ENCODE measurements at regions of chr21 and their contacts with region 1.

Region 1: DNA sequence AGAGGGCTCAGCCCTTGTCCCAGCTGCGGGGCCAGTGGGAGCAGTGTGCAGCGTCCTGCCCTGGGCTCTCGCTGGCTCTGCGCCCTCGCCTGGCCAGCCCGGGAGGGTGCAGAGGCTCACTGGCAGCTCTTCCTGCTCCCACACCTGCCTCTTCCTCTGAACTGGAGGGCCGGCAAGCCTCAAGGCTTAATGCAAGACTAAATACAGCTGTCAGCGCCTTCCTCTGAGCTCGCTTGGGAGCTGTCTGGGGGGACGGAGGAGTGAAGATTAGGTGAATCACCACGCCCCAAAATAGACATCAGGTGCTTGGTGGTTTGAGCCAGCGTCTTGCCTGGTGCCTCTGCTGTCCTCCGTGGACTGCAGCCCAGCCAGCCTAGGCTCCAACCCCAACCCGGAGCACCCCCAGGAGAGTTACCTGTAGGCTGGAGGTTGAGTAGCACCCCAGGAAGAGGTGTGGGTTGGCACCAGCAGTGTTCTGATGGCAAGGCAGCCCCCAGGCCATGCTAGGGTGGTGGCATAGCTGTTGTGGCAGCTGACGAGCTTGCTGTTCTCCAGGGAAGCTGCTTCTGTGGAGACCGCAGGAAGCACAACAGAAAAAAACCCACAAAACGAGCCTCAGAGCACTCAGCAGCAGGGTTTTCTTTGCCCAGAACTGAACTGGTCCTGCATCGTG is 36.9 kb downstream of the UMODL1 start:
- DNase-seq: no peak
- H3K4me3 ChIP-seq: no peak overlapping the region
- H3K27ac ChIP-seq: no peak overlapping the region
- H3K4me1 ChIP-seq: peaks cover 0 to 19% (median 11%) of the 10 kb centered on the region in 4 donors
- H3K27me3 ChIP-seq: peaks cover 0 to 50% (median 0%) of the 10 kb centered on the region in 4 donors
- CTCF ChIP-seq: peak; percentile 45 to 57 (median 53)
- EP300 ChIP-seq: no peak
- POLR2A ChIP-seq: no peak

Region 2: DNA sequence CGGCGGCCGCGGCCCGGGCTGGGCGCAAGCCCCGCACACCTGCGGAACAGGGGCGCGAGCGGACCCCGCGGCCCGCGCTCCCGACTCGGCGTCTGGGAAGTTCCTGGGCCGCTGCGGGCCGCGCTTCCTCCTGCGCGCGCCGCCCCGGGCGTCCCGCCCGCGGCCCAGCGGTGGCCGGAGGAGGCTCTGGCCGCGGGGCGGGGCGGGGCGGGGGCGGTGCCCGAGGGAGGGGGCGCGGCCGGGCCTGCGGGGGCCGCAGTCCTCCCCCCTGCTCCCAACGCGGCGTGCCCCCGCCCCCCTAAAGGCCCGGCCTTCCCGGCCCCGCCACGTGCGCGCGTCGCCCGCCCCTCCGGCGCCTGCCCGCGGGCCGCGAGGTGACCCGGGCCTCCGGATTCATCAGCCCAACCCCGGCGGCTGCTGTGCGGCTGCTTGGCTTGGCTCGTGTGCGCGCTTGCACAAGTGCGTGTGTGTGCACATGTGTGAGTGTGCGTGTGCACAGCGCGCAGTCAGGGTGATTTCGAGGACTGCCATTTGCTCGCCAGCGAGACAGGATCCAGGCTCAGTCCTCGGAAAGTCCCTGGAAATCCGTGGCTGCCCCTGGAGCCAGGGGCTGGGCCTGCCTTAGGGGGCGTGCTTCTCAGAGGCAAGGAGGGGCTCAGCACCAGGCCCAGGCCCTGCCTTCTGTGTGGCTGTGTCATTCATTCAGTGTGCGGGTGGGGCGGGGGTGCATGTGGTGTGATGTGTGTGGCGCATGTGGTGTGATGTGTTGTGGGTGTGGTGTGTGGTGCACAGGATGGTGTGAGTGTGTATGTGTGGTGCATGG is 154.0 kb before region 1 on chr21 and contains the start of gene C2CD2:
- intact Hi-C with region 1: loop called (anchors 5 kb)
- DNase-seq: no peak
- H3K4me3 ChIP-seq: peak within 1 kb of the TSS; percentile 74 to 93 (median 80)
- H3K27ac ChIP-seq: peak within 1 kb of the TSS; percentile 62 to 82 (median 76)
- H3K4me1 ChIP-seq: peaks cover 28 to 72% (median 57%) of the 10 kb centered on the region in 4 donors
- H3K27me3 ChIP-seq: no peaks in the 10 kb centered on the region
- CTCF ChIP-seq: no peak
- EP300 ChIP-seq: no peak
- POLR2A ChIP-seq: no peak
- total RNA-seq, gene C2CD2: 11.6 to 25.3 (median 18.9) TPM

Region 3: GRCh38 chr21:42289926-42290325 is 181.9 kb after region 1 on chr21:
- intact Hi-C with region 1: no loop called
- DNase-seq: no peak
- H3K4me3 ChIP-seq: no peak overlapping the region
- H3K27ac ChIP-seq: no peak overlapping the region
- H3K4me1 ChIP-seq: no peaks in the 10 kb centered on the region
- H3K27me3 ChIP-seq: no peaks in the 10 kb centered on the region
- CTCF ChIP-seq: no peak
- EP300 ChIP-seq: no peak
- POLR2A ChIP-seq: no peak

Region 4: GRCh38 chr21:42389449-42389835 is 281.4 kb after region 1 on chr21:
- intact Hi-C with region 1: no loop called
- DNase-seq: no peak
- H3K4me3 ChIP-seq: no peak overlapping the region
- H3K27ac ChIP-seq: no peak overlapping the region
- H3K4me1 ChIP-seq: no peaks in the 10 kb centered on the region
- H3K27me3 ChIP-seq: peaks cover 0 to 74% (median 0%) of the 10 kb centered on the region in 4 donors
- CTCF ChIP-seq: no peak
- EP300 ChIP-seq: no peak
- POLR2A ChIP-seq: no peak

Measured in esophagus muscularis mucosa (tissue), 4 donors.